ENCODE measurements at regions of chr14 and their contacts with region 1.

Region 1: GRCh38 chr14:90383075-90383730 is 13.6 kb upstream of the CALM1 start:
- DNase-seq: peak; percentile 100
- ATAC-seq: peak; percentile 93 to 98 (median 96)
- H3K4me3 ChIP-seq: peak overlapping the region; percentile 47 to 80 (median 66)
- H3K27ac ChIP-seq: peak overlapping the region; percentile 98 to 100 (median 99)
- H3K4me1 ChIP-seq: peaks cover 4 to 44% (median 27%) of the 10 kb centered on the region in 12 donors
- H3K27me3 ChIP-seq: no peaks in the 10 kb centered on the region
- CTCF ChIP-seq: peak in 7 of 12 donors; percentile 10 to 31 (median 25)
- POLR2A ChIP-seq: peak; percentile 31 to 91

Region 2: DNA sequence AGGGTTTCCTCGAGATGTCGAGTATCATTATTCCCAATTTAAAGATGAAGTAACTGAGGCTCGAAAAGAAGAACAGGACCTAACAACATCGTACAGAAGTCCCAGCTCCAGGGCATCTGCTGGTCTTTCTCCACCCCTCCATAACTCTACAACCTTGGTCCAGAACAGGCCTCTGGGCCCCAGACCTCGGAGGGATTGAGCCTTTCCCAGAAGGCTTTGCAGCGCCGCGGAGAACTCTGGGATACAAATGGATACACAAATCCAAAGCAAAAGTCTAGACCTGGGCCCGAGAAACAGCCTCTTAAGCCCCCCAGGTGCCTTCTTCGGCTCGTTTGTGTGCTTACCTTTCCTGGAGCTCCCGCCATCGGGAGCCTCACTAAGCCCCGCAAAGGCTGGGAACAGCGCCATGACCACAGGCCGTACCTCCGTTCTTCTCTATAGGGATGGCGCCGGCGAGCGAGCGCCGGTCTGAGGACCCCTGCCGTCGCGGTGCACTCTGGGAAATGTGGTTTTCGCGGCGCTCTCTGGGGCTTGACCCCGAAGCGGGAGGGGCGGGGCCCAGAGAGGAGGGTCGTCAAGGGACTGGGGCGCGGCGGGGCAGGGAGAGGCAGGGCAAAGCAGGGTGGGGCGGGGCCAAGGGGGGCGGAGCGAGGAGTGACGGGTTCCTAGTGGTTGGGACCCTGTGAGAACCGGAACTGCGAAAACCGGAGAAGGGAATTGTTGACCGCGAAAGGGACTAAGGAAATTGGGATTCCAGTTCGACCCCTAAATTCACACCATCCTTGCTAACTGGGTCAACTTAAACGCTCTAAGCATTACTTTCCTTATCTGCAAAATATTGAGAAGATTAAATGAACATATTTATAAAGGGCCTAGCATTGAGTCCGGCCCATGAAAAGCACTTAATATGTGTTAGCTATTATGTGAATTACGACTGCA is 51.4 kb before region 1 on chr14 and contains the start of gene NRDE2:
- intact Hi-C with region 1: loop called in 8 of 10 experiments (anchors 1 to 5 kb)
- DNase-seq: peak; percentile 100
- ATAC-seq: peak; percentile 100
- H3K4me3 ChIP-seq: peak within 1 kb of the TSS; percentile 54 to 96 (median 76)
- H3K27ac ChIP-seq: peak within 1 kb of the TSS; percentile 77 to 96 (median 88)
- H3K4me1 ChIP-seq: peaks cover 0 to 20% (median 8%) of the 10 kb centered on the region in 12 donors
- H3K27me3 ChIP-seq: peaks cover 0 to 14% (median 0%) of the 10 kb centered on the region in 9 donors
- CTCF ChIP-seq: peak in 1 of 12 donors; percentile 33
- POLR2A ChIP-seq: peak in 1 of 2 donors; percentile 29
- total RNA-seq, gene NRDE2: 5.2 to 15.4 (median 10.7) TPM

Region 3: GRCh38 chr14:90454041-90455000 is 71.1 kb after region 1 on chr14:
- intact Hi-C with region 1: no loop called
- DNase-seq: peak; percentile 80 to 88 (median 82)
- ATAC-seq: peak; percentile 86 to 95 (median 92)
- H3K4me3 ChIP-seq: peak overlapping the region in 10 of 12 donors; percentile 30 to 60 (median 38)
- H3K27ac ChIP-seq: peak overlapping the region in 8 of 12 donors; percentile 28 to 83 (median 57)
- H3K4me1 ChIP-seq: peaks cover 0 to 38% (median 14%) of the 10 kb centered on the region in 12 donors
- H3K27me3 ChIP-seq: no peaks in the 10 kb centered on the region
- CTCF ChIP-seq: peak in 2 of 12 donors; percentile 17 to 27
- POLR2A ChIP-seq: peak in 1 of 2 donors; percentile 20

Measured in heart left ventricle (tissue), 16 donors.